Aorta (tissue), 5 donors: ENCODE measurements at regions of chr4 and their contacts with region 1.

Region 1: DNA sequence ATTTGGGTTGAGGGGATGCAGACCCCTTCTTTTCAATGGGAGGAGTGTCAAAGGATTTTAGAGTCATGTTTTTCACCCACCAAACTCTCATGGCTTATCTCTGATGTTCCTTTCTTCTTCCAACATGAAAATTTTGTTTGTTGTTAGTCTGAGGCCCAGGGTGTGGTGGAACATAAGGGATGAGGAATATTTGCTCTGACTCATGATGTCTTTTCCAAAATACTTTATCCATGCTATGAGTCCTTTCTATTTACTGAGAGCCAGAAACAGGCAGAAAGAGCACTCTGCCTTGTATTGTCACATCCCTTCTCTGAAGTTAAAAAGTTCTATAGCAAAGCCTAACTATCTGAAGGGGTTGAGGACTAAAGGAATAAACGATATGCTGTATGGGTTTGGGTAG is 61.6 kb upstream of the GYPA start:
- DNase-seq: no peak
- ATAC-seq: no peak
- H3K4me3 ChIP-seq: no peak overlapping the region
- H3K27ac ChIP-seq: no peak overlapping the region
- H3K4me1 ChIP-seq: no peaks in the 10 kb centered on the region
- H3K27me3 ChIP-seq: no peaks in the 10 kb centered on the region

Region 2: DNA sequence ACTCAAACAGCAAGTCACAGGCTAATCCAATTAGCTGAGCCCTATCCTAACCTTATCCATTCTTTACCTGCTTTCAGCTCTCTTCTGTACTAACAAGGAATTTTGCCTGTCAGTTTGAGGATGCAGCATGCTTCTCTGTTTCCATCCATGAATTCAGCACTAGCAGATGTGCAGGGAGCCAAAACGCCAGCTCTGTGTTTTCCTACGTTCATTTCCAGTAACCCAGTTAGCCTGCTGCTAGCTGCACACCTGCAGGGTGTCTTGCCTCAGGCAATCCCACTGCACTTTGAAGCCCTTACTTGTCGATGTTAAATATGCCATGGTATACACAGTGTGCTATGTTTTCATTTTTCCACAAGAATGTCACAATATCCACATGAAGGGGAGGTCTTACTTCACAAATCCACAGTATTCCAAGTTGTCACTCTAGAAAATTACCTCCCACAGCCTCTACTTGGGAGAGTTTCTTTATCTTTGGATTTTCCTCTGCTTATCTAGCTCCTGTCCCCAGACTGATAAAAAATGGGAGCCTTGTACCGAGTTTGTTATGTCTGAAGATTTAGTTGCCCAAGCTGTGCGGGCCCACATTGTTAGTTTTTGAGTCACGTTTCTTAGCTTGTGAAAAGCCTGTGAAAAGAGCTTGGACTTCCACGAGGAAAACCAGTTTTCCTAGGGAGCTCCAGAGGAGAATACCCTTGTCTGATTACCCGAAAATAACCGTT is 316.3 kb after region 1 on chr4:
- intact Hi-C with region 1: loop called in 1 of 2 experiments (anchors 10 kb)
- DNase-seq: no peak
- ATAC-seq: no peak
- H3K4me3 ChIP-seq: no peak overlapping the region
- H3K27ac ChIP-seq: no peak overlapping the region
- H3K4me1 ChIP-seq: no peaks in the 10 kb centered on the region
- H3K27me3 ChIP-seq: no peaks in the 10 kb centered on the region